Left ventricle myocardium superior (tissue), 1 donor: ENCODE measurements at regions of chr6 and their contacts with region 1.

Region 1: DNA sequence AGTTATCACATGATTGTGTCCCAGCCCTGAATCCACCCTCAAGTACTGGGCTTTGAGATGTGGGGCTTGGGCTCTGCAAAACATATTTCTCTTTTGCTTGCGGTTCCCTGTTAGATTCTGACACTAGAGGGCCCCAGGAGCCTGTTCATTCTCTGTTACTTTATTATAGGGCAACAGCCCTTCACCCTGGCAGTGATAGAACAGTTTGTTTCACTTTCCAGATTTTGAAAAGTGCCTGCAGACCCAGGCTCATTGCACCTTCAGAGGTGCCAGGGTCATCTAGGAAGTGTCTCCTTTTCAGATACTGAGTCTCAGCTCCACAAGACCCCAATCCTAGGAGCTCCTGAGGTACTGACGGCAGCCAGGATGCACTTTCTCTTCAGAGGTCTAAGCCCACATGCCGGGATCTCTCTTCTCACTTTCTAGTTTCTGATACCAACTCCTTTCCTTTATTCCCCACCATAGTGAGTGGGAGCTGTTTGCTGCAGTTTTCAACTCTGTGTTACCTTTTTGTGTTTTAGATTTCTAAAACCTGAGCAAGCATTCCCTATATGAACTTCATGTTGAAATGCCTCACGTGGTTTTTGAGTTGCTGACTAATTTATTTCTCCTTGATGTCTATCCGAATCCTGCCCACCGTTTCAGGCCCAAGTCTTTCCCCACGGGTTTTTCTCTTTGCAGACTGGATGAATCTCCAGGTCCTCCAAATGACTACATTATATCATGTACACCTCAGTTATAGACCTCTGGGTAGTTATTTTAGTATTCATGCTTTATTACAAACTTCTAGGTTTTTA is 10.9 kb downstream of the ABT1 start:
- DNase-seq: no peak
- ATAC-seq: peak; percentile 57

Region 2: DNA sequence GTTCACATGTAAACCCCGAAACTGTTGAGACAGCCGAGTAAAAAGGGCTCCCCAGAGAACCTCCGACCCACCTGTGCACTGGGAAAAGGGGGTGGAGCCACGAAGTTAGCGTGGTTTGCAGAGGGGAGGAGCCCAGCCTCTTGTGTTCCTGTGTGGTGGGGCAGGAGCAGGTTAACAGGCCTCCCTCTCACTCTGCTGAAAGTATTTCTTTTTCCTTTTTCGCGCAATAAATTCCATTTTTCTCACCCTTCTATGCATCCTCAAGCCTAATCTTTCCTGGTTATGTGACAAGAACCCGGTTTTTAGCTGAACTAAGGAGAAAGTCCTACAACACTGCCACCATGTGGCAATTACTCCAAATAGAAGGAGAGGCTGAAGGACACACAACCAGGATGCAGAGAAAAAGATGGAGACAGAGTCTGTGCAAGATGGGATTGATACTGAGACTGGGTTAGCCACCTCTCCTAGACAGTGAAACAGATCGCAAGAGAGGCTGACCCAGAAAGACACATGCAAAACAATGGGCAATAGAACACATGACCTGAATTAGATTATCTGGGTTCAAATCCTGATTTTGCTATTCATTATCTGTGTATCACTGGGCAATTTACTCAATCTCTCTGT is 471.2 kb after region 1 on chr6:
- intact Hi-C with region 1: loop called (anchors 5 kb)
- DNase-seq: no peak
- ATAC-seq: peak; percentile 55